Endothelial cell of umbilical vein (primary cell): ENCODE measurements at regions of chr12 and their contacts with region 1.

Region 1: DNA sequence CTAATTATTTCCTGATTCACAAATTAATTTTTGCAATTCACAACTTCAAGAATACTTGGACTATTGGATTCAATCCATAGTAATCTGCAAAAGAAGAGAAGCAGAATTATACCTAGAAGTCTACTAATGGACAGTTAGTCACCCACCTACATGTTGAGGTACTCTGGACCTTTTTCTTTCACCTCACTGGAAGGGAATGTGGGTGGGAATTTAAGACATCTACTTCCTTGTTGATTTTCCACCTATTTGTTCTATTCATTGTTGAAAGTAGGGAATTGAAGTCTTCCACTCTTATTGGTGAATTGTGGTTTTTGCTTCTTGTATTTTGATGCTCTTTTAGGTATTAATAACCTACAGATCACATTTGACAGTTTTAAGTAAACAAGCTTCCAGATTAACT is 11.0 kb downstream of the RESF1 start:
- DNase-seq: no peak
- H3K4me3 ChIP-seq: no peak overlapping the region
- H3K27ac ChIP-seq: no peak overlapping the region
- H3K4me1 ChIP-seq: no peaks in the 10 kb centered on the region
- H3K27me3 ChIP-seq: no peaks in the 10 kb centered on the region
- CTCF ChIP-seq: no peak
- POLR2A ChIP-seq: no peak

Region 2: GRCh38 chr12:31914927-31915326 is 55.3 kb before region 1 on chr12:
- CTCF ChIA-PET with region 1: no interaction called
- POLR2A ChIA-PET with region 1: no interaction called
- dilution Hi-C with region 1: loop called (anchors 10 kb)
- intact Hi-C with region 1: no loop called
- DNase-seq: no peak
- H3K4me3 ChIP-seq: no peak overlapping the region
- H3K27ac ChIP-seq: no peak overlapping the region
- H3K4me1 ChIP-seq: no peaks in the 10 kb centered on the region
- H3K27me3 ChIP-seq: no peaks in the 10 kb centered on the region
- CTCF ChIP-seq: no peak
- POLR2A ChIP-seq: no peak